ENCODE measurements at regions of chr7 and their contacts with region 1.

Region 1: DNA sequence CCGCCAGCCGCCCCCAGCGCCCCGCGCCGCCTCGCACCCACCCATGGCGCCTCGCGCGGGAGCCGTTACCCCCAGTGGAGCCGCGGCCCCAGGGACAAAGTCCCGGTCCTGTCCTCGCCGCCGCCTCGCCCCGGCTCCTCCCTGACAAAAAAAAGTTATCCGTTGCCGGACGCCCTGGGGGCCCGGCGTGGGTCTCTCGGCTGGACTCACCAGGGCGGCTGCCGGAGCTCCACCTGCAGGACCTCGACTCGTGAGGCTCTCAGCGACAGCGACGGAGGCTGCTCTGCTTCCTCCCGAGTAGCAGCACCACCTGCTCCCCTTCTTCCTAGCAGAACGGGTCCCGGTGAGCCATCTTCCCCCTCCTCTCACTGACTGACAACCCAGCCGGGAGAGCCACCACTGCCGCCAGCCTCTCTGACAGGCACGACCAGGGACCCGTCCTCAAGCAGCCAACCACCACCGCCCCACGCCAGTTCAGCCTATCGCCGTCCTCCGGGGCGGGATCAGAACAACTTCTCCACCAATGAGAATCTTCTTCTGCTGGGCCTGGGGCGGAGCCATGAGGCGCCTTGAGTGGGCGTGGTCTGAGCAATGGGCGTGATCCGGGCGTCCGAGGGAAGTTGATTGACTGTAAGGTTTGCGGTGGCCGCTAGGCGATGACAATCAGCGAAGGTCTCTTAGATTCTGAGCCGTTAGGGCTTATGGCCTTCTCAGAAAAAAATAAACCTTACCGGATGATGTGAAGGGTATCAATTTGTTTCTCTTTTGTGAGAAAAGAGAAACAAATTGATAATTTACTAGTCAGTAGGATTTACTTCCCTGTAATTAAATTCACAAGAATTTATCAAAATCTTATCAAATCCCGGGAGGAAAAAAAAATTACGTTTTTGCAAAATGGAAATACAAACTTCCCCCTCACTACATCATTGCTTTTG is at the start of gene HYCC1:
- DNase-seq: peak; percentile 97 to 99 (median 99)
- ATAC-seq: peak; percentile 97
- H3K4me3 ChIP-seq: peak within 1 kb of the TSS; percentile 65 to 95
- H3K4me3 Mint-ChIP-seq: peak within 1 kb of the TSS; percentile 97
- H3K27ac ChIP-seq: peak within 1 kb of the TSS; percentile 48 to 63
- H3K27ac Mint-ChIP-seq: peak within 1 kb of the TSS; percentile 89
- H3K4me1 ChIP-seq: peaks cover 21% of the 10 kb centered on the region
- H3K4me1 Mint-ChIP-seq: peaks cover 20% of the 10 kb centered on the region
- H3K27me3 ChIP-seq: no peaks in the 10 kb centered on the region
- H3K27me3 Mint-ChIP-seq: peaks cover 3% of the 10 kb centered on the region
- CTCF ChIP-seq: peak; percentile 60
- total RNA-seq, gene HYCC1: 10.7 to 13.5 TPM

Region 2: GRCh38 chr7:22854158-22855048 is 159.6 kb before region 1 on chr7:
- CTCF ChIA-PET with region 1: no interaction called
- POLR2A ChIA-PET with region 1: no interaction called
- intact Hi-C with region 1: loop called (anchors 1 to 2 kb)
- DNase-seq: peak in 8 of 9 experiments; percentile 58 to 89 (median 76)
- ATAC-seq: peak; percentile 79
- H3K4me3 ChIP-seq: peak overlapping the region; percentile 82 to 94
- H3K4me3 Mint-ChIP-seq: peak overlapping the region; percentile 93
- H3K27ac ChIP-seq: peak overlapping the region; percentile 64 to 81
- H3K27ac Mint-ChIP-seq: peak overlapping the region; percentile 93
- H3K4me1 ChIP-seq: peaks cover 11% of the 10 kb centered on the region
- H3K4me1 Mint-ChIP-seq: peaks cover 23% of the 10 kb centered on the region
- H3K27me3 ChIP-seq: no peaks in the 10 kb centered on the region
- H3K27me3 Mint-ChIP-seq: no peaks in the 10 kb centered on the region
- CTCF ChIP-seq: peak; percentile 65

Region 3: GRCh38 chr7:23181684-23182553 is 167.9 kb after region 1 on chr7 and contains the start of gene NUP42:
- CTCF ChIA-PET with region 1: no interaction called
- POLR2A ChIA-PET with region 1: no interaction called
- intact Hi-C with region 1: loop called (anchors 1 to 2 kb)
- DNase-seq: peak; percentile 89 to 98 (median 95)
- ATAC-seq: peak; percentile 90
- H3K4me3 ChIP-seq: peak within 1 kb of the TSS; percentile 77 to 84
- H3K4me3 Mint-ChIP-seq: peak within 1 kb of the TSS; percentile 100
- H3K27ac ChIP-seq: peak within 1 kb of the TSS; percentile 86 to 91
- H3K27ac Mint-ChIP-seq: peak within 1 kb of the TSS; percentile 100
- H3K4me1 ChIP-seq: peaks cover 30% of the 10 kb centered on the region
- H3K4me1 Mint-ChIP-seq: peaks cover 39% of the 10 kb centered on the region
- H3K27me3 ChIP-seq: no peaks in the 10 kb centered on the region
- H3K27me3 Mint-ChIP-seq: no peaks in the 10 kb centered on the region
- CTCF ChIP-seq: no peak
- total RNA-seq, gene NUP42: 17.3 to 20.4 TPM

Region 4: DNA sequence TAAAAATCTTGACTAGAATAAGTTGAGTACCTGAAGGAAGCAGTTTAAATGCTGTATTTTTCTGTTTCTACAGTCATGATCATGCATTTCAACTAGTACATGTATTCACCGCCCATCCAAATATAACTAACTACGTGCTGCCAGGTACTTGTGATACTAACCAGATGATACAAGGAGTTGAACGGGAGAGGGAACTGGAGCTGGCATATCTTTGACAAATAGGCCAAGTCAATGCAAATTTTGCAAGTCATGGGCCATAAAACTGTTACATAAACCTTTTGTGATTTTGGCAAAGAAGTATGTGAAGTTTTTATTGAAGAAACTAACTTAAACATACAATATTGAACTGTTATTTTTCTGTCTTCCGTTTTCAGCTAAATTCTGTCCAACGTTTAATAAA is 182.3 kb after region 1 on chr7:
- CTCF ChIA-PET with region 1: no interaction called
- POLR2A ChIA-PET with region 1: no interaction called
- intact Hi-C with region 1: no loop called
- DNase-seq: no peak
- ATAC-seq: no peak
- H3K4me3 ChIP-seq: no peak overlapping the region
- H3K4me3 Mint-ChIP-seq: no peak overlapping the region
- H3K27ac ChIP-seq: no peak overlapping the region
- H3K27ac Mint-ChIP-seq: no peak overlapping the region
- H3K4me1 ChIP-seq: no peaks in the 10 kb centered on the region
- H3K4me1 Mint-ChIP-seq: no peaks in the 10 kb centered on the region
- H3K27me3 ChIP-seq: no peaks in the 10 kb centered on the region
- H3K27me3 Mint-ChIP-seq: no peaks in the 10 kb centered on the region
- CTCF ChIP-seq: no peak

Region 5: DNA sequence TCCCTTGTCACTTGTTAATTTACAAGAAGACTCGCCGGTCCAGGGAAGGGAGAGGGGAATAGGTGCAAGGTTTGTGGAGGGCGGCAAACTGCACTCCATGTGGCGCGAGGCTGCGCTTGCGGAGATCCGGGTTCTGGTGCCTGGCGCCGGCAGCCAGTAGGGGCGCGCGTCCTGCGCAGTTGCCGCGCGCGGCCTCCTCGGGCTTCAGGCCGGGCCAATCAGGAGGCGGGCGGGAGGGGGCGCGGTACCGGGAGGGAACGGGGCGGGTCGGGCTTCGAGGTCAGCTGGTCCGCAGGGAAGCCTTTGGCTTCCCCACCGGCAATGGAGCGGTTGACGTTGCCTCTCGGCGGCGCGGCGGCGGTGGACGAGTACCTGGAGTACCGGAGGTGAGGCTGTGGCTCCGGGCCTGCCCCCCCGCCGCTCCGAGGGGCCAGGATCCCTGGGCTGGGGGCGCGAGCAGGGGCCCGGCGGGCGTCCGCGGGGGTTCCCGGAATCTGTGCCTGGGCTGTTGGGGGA is 666.0 kb after region 1 on chr7 and contains the start of gene FAM221A:
- CTCF ChIA-PET with region 1: no interaction called
- POLR2A ChIA-PET with region 1: no interaction called
- intact Hi-C with region 1: loop called in 1 of 2 experiments (anchors 5 kb)
- DNase-seq: peak; percentile 55 to 90 (median 80)
- ATAC-seq: peak; percentile 97
- H3K4me3 ChIP-seq: peak within 1 kb of the TSS; percentile 49 to 71
- H3K4me3 Mint-ChIP-seq: peak within 1 kb of the TSS; percentile 96
- H3K27ac ChIP-seq: peak within 1 kb of the TSS; percentile 3 to 18
- H3K27ac Mint-ChIP-seq: peak within 1 kb of the TSS; percentile 79
- H3K4me1 ChIP-seq: peaks cover 3% of the 10 kb centered on the region
- H3K4me1 Mint-ChIP-seq: peaks cover 18% of the 10 kb centered on the region
- H3K27me3 ChIP-seq: no peaks in the 10 kb centered on the region
- H3K27me3 Mint-ChIP-seq: no peaks in the 10 kb centered on the region
- CTCF ChIP-seq: peak; percentile 73
- total RNA-seq, gene FAM221A: 2.4 to 3.0 TPM

Region 6: DNA sequence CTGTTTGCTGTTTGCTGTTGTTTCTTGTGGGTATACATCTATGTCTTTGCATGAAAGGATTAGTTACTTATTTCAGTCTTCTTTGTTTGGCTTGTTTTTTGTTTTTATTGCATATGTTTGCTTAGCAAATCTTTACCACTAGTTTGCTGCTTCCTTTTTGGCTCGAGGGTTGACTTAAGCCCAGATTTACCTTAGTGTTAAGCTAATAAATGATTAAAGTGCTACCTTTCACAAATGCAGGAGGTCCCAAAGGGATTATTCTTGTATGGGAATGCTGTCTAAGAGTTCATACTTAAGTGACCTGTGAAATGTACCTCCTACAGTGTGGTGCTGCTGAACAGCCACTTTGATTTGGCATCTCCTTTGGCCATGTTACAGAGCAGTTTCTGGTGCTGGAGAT is 996.5 kb after region 1 on chr7:
- CTCF ChIA-PET with region 1: no interaction called
- POLR2A ChIA-PET with region 1: no interaction called
- intact Hi-C with region 1: no loop called
- DNase-seq: no peak
- ATAC-seq: no peak
- H3K4me3 ChIP-seq: no peak overlapping the region
- H3K4me3 Mint-ChIP-seq: no peak overlapping the region
- H3K27ac ChIP-seq: no peak overlapping the region
- H3K27ac Mint-ChIP-seq: no peak overlapping the region
- H3K4me1 ChIP-seq: no peaks in the 10 kb centered on the region
- H3K4me1 Mint-ChIP-seq: no peaks in the 10 kb centered on the region
- H3K27me3 ChIP-seq: peaks cover 0 to 5% of the 10 kb centered on the region in 2 experiments
- H3K27me3 Mint-ChIP-seq: peaks cover 8% of the 10 kb centered on the region
- CTCF ChIP-seq: no peak